Activated naive CD4-positive, alpha-beta T cell treated with anti-CD3 and anti-CD28 coated beads for 36 hours (primary cell): ENCODE measurements at regions of chr1 and their contacts with region 1.

Region 1: DNA sequence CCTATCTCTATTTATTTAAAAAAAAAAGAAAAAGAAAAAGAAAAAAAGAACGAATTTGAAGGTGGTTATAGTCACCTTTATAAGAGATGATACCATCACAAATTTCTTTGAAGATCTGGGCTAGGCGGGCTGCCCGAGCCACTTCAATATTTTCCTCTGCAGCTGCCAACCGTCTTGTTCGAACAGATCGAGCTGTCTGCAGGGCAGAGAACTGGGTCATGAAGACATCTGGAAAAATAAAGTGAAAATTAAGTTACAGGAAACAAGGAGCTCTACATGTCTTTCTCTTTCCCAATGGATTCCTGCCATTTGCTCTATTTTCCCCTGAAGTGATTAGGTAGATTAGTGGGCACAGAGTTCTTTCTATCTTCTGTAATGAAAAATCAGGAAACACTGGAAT is 31.9 kb downstream of the RUSC1 start:
- DNase-seq: no peak
- H3K4me3 Mint-ChIP-seq: no peak overlapping the region
- H3K27ac Mint-ChIP-seq: no peak overlapping the region
- H3K4me1 Mint-ChIP-seq: no peaks in the 10 kb centered on the region
- H3K27me3 Mint-ChIP-seq: no peaks in the 10 kb centered on the region

Region 2: GRCh38 chr1:154974063-154974807 is 378.4 kb before region 1 on chr1 and contains the start of gene CKS1B:
- CTCF ChIA-PET with region 1: no interaction called
- intact Hi-C with region 1: no loop called
- DNase-seq: peak; percentile 99
- H3K4me3 Mint-ChIP-seq: no peak within 1 kb of the TSS
- H3K27ac Mint-ChIP-seq: no peak within 1 kb of the TSS
- H3K4me1 Mint-ChIP-seq: peaks cover 32% of the 10 kb centered on the region
- H3K27me3 Mint-ChIP-seq: no peaks in the 10 kb centered on the region
- total RNA-seq, gene CKS1B: 283 to 291 TPM

Region 3: GRCh38 chr1:155339515-155340097 is 13.0 kb before region 1 on chr1:
- CTCF ChIA-PET with region 1: interaction called, 3 read pairs
- intact Hi-C with region 1: loop called (anchors 1 kb)
- DNase-seq: no peak
- H3K4me3 Mint-ChIP-seq: no peak overlapping the region
- H3K27ac Mint-ChIP-seq: no peak overlapping the region
- H3K4me1 Mint-ChIP-seq: no peaks in the 10 kb centered on the region
- H3K27me3 Mint-ChIP-seq: no peaks in the 10 kb centered on the region